Ovary (tissue), 10 donors: ENCODE measurements at regions of chr3 and their contacts with region 1.

Region 1: DNA sequence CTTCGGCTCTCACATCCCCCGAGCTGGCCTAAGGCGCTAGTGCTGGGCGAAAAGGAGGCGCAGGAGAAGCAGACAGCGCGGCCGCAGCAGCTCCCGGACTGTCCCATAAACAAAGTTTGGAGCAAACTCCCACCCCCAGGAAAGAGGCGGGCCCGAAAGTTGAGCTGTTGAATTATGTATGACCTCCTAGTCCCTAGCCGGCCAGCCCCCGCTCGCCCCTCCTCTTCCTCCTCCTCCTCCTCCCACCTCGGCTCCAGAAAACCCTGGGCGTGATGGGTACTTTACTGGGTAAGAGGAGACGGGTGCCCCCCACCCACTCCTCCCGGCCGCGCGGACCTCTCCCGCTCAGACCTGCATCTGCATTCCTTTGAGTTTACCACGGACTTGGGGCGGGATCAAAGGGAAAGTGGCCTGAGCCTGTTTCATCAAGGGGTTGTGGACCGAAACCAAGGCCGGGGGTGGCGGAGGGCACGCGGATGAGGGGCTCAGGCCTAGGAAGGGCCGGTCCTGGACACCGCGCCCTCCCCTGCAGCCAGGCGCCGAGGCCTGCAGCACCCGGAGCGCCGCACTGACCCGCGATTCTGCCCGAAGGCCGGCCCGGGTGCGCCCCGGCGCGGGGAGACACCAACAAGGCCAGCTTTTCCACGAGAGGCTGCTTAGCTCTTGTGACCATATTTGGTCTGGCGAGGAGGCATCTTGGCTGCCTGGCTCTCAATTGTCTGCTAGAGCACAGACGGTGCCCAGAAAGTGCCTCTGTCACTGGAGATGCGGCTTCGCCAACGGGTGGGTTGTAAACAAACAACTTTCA is at the start of gene WWTR1:
- DNase-seq: peak; percentile 94 to 97 (median 96)
- H3K4me3 ChIP-seq: peak within 1 kb of the TSS; percentile 80
- H3K27ac ChIP-seq: peak within 1 kb of the TSS; percentile 97 to 98
- H3K4me1 ChIP-seq: peaks cover 9% of the 10 kb centered on the region
- H3K27me3 ChIP-seq: no peaks in the 10 kb centered on the region
- CTCF ChIP-seq: peak in 2 of 3 donors; percentile 19 to 28
- EP300 ChIP-seq: no peak
- POLR2A ChIP-seq: peak; percentile 91
- total RNA-seq, gene WWTR1: 96.0 to 160 (median 112) TPM

Region 2: GRCh38 chr3:149547938-149548668 is 110.0 kb before region 1 on chr3:
- intact Hi-C with region 1: loop called in 1 of 4 experiments (anchors 5 kb)
- DNase-seq: peak; percentile 56 to 71 (median 67)
- H3K4me3 ChIP-seq: no peak overlapping the region
- H3K27ac ChIP-seq: peak overlapping the region; percentile 49 to 87
- H3K4me1 ChIP-seq: peaks cover 29% of the 10 kb centered on the region
- H3K27me3 ChIP-seq: no peaks in the 10 kb centered on the region
- CTCF ChIP-seq: no peak
- EP300 ChIP-seq: no peak
- POLR2A ChIP-seq: no peak

Region 3: DNA sequence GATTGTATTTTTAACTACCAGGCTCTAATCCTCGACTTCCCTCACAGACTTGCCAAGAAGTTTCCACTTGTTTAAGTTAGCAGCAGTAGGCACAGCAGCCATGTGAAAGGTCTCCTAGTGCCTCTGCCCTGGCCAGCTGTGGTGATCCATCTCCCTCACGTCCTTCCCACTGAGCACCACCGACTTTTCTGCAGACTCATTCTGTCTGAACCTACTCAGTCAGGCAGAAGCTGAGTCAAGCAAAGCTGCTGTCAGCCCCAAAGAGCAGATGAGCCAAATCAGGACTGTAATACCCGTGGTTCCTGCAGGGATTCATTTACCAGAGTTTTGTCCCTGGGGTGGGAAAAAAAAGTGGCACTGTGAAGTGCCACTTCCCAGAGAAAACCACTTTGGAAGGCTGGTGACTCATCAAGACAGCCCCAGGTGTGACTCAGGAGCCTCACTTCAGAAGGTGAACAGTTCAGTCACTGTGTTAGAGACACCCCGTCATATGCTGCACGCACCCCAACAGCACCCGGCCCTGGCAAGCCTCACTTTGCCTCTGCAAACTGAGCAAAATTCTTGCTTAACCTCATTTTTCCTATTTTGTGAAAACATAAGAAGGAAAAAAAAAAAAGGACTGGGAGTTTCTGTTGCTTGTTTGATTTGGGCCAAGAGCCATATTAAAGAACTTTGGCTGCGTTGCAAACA is 76.3 kb before region 1 on chr3:
- intact Hi-C with region 1: loop called in 2 of 4 experiments (anchors 10 kb)
- DNase-seq: peak in 3 of 5 donors; percentile 29 to 49 (median 48)
- H3K4me3 ChIP-seq: no peak overlapping the region
- H3K27ac ChIP-seq: peak overlapping the region in 1 of 2 donors; percentile 52
- H3K4me1 ChIP-seq: peaks cover 26% of the 10 kb centered on the region
- H3K27me3 ChIP-seq: no peaks in the 10 kb centered on the region
- CTCF ChIP-seq: no peak
- EP300 ChIP-seq: no peak
- POLR2A ChIP-seq: no peak

Region 4: GRCh38 chr3:149702691-149703441 is 44.7 kb after region 1 on chr3:
- intact Hi-C with region 1: loop called in 1 of 4 experiments (anchors 5 kb)
- DNase-seq: peak in 1 of 5 donors; percentile 48
- H3K4me3 ChIP-seq: no peak overlapping the region
- H3K27ac ChIP-seq: peak overlapping the region in 1 of 2 donors; percentile 81
- H3K4me1 ChIP-seq: peaks cover 11% of the 10 kb centered on the region
- H3K27me3 ChIP-seq: no peaks in the 10 kb centered on the region
- CTCF ChIP-seq: no peak
- EP300 ChIP-seq: no peak
- POLR2A ChIP-seq: no peak

Region 5: GRCh38 chr3:149726716-149727407 is 68.7 kb after region 1 on chr3:
- intact Hi-C with region 1: no loop called
- DNase-seq: no peak
- H3K4me3 ChIP-seq: no peak overlapping the region
- H3K27ac ChIP-seq: no peak overlapping the region
- H3K4me1 ChIP-seq: no peaks in the 10 kb centered on the region
- H3K27me3 ChIP-seq: no peaks in the 10 kb centered on the region
- CTCF ChIP-seq: no peak
- EP300 ChIP-seq: no peak
- POLR2A ChIP-seq: no peak